ENCODE measurements at regions of chr17 and their contacts with region 1.

Region 1: GRCh38 chr17:41966463-41967140 is at the start of gene CNP:
- DNase-seq: peak; percentile 91 to 93
- ATAC-seq: peak; percentile 90 to 97 (median 95)
- H3K4me3 ChIP-seq: peak within 1 kb of the TSS; percentile 69 to 100 (median 92)
- H3K27ac ChIP-seq: peak within 1 kb of the TSS; percentile 72 to 93 (median 90)
- H3K4me1 ChIP-seq: peaks cover 8 to 57% (median 34%) of the 10 kb centered on the region in 9 donors
- H3K27me3 ChIP-seq: no peaks in the 10 kb centered on the region
- CTCF ChIP-seq: no peak
- total RNA-seq, gene CNP: 19.4 to 42.7 (median 26.2) TPM

Region 2: GRCh38 chr17:41738077-41738735 is 228.4 kb before region 1 on chr17:
- intact Hi-C with region 1: loop called in 1 of 10 experiments (anchors 10 kb)
- DNase-seq: peak; percentile 72 to 82
- ATAC-seq: peak; percentile 83 to 93 (median 88)
- H3K4me3 ChIP-seq: no peak overlapping the region
- H3K27ac ChIP-seq: no peak overlapping the region
- H3K4me1 ChIP-seq: peaks cover 7 to 27% (median 22%) of the 10 kb centered on the region in 9 donors
- H3K27me3 ChIP-seq: peaks cover 19 to 47% (median 47%) of the 10 kb centered on the region in 7 donors
- CTCF ChIP-seq: peak; percentile 97 to 100 (median 99)

Region 3: DNA sequence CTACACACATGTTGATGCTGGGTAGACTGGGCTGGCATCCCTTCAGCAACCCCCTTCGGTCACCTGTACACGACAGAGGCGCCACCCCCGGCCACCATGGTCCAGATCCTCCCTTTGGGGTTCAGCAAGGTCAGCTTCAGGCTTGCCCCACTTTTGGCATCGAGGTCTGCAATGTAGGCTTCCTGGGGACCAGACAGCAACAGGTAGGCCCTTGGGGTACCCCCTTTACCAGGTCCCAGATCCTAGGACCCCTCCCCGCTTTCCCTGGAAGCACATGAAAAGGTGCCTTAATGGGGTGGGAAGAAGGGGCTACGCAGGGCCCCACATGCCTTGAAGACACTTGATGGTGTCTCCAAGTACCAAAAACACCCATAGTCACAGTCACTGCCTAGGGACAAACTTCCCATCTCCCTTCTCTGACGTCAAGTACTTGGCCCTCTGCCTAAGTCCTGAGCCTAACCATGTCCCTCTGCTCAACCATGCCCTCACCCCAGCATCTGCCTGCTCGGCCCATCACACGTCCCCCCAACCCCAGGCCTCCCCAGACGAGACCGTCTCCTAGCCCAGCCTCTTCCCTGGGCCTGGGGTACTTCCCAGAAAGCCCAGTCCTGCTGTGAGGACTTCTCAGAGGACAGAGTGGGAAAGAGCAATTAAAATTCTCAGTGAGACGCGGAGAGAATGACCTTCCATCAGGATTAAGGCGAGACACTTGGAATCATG is 60.0 kb before region 1 on chr17:
- intact Hi-C with region 1: no loop called
- DNase-seq: no peak
- ATAC-seq: peak in 3 of 8 donors; percentile 12 to 59 (median 38)
- H3K4me3 ChIP-seq: no peak overlapping the region
- H3K27ac ChIP-seq: no peak overlapping the region
- H3K4me1 ChIP-seq: peaks cover 0 to 4% (median 0%) of the 10 kb centered on the region in 9 donors
- H3K27me3 ChIP-seq: no peaks in the 10 kb centered on the region
- CTCF ChIP-seq: no peak

Region 4: DNA sequence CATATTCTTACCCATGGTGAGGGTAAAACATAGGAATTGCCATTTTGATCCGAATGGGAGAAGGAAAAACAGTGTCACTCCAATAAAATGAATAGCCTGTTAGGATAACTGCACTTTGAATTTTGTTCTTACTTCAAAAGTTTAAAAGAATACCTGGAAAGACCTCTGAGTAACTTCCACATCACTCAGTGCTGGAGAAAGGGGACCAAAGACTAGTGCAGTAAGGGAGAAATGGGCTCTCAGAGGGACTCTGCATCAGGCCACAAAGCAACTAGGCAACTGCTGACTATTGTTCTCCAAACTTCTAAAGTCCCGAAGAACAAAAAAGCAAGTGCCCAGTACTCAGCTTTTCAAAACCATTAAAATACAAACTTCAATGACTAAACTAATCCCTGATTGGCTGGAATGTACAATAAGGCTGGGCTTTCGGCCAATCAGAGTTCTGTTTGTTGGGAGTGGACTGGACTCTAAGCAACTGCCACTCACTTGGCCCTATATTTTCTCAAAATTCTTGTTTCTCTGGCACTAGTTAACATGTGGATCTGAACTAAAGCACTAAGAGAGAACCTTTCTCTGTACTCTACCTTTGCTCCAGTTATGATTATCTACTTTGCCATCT is 44.4 kb after region 1 on chr17:
- intact Hi-C with region 1: loop called in 6 of 10 experiments (anchors 5 kb)
- DNase-seq: no peak
- ATAC-seq: no peak
- H3K4me3 ChIP-seq: no peak overlapping the region
- H3K27ac ChIP-seq: peak overlapping the region in 4 of 10 donors; percentile 7 to 38 (median 34)
- H3K4me1 ChIP-seq: peaks cover 0 to 98% (median 94%) of the 10 kb centered on the region in 9 donors
- H3K27me3 ChIP-seq: no peaks in the 10 kb centered on the region
- CTCF ChIP-seq: no peak

Region 5: DNA sequence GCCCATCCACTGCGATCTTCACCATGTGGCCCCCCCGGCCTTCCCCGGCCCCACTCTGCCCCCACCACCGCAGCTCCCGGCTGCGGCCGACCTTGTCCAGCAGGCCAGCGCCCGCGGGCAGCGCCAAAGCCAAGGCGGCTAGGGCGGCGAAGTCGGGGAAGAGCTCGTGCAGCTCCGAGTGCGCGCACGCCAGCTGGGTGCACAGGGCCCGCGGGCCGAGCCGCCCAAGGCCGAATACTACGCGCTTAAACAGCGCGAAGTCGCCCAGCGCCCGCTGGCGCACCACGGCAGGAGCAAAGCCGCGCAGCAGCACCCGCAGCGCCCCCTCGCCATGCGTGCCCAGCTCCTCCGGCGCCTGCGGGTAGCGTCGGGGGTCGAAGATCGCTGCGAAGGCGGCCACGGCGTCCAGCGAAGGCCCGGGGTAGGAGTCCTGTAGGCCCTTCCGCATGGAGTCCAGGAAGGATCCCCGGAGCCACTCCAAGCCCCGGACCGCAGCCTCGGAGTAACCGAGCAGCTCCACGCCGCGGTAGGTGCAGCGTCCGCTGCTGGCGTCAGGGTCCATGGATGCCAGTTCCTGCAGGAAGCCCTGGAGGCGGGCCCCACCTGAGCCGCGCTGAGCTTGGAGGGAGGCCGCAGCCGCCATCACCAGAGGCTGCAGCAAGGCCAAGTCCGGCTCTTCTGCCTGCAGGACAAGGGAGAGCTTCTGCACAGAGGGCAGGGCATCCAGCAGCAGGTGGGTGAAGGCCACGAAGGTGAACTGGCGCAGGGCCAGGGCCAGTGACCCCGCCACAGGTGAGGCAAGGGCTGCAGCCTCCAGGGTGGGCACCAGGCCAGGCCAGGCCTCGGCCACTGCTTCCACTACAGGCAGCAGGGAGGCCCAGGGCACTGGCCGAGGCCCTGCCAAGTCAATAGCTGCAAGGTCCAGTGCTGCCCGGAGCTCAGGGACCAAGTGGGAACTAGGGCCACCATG is 73.5 kb after region 1 on chr17:
- intact Hi-C with region 1: no loop called
- DNase-seq: no peak
- ATAC-seq: peak in 6 of 8 donors; percentile 14 to 63 (median 24)
- H3K4me3 ChIP-seq: peak overlapping the region in 7 of 10 donors; percentile 8 to 35 (median 25)
- H3K27ac ChIP-seq: no peak overlapping the region
- H3K4me1 ChIP-seq: peaks cover 0 to 10% (median 5%) of the 10 kb centered on the region in 9 donors
- H3K27me3 ChIP-seq: peaks cover 0 to 31% (median 15%) of the 10 kb centered on the region in 7 donors
- CTCF ChIP-seq: no peak

Region 6: GRCh38 chr17:42101513-42102319 is 135.1 kb after region 1 on chr17:
- intact Hi-C with region 1: loop called in 4 of 10 experiments (anchors 5 to 10 kb)
- DNase-seq: peak; percentile 71 to 85
- ATAC-seq: peak; percentile 63 to 87 (median 82)
- H3K4me3 ChIP-seq: no peak overlapping the region
- H3K27ac ChIP-seq: no peak overlapping the region
- H3K4me1 ChIP-seq: peaks cover 0 to 17% (median 10%) of the 10 kb centered on the region in 9 donors
- H3K27me3 ChIP-seq: peaks cover 2 to 21% (median 19%) of the 10 kb centered on the region in 7 donors
- CTCF ChIP-seq: peak; percentile 69 to 89 (median 83)

Region 7: GRCh38 chr17:42527273-42527703 is 560.7 kb after region 1 on chr17:
- intact Hi-C with region 1: loop called in 1 of 10 experiments (anchors 10 kb)
- DNase-seq: peak in 1 of 2 donors; percentile 81
- ATAC-seq: peak; percentile 67 to 92 (median 81)
- H3K4me3 ChIP-seq: no peak overlapping the region
- H3K27ac ChIP-seq: peak overlapping the region in 8 of 10 donors; percentile 4 to 97 (median 70)
- H3K4me1 ChIP-seq: peaks cover 16 to 61% (median 40%) of the 10 kb centered on the region in 9 donors
- H3K27me3 ChIP-seq: no peaks in the 10 kb centered on the region
- CTCF ChIP-seq: peak; percentile 68 to 91 (median 86)